ENCODE measurements at regions of chr3 and their contacts with region 1.

Region 1: GRCh38 chr3:131501968-131502367 is 803 bp downstream of the MRPL3 start:
- DNase-seq: no peak
- H3K4me3 ChIP-seq: peak overlapping the region; percentile 67 to 96 (median 91)
- H3K4me3 Mint-ChIP-seq: peak overlapping the region; percentile 96
- H3K27ac ChIP-seq: peak overlapping the region in 1 of 2 donors; percentile 87
- H3K27ac Mint-ChIP-seq: peak overlapping the region; percentile 1 to 93 (median 89)
- H3K4me1 ChIP-seq: peaks cover 32 to 44% of the 10 kb centered on the region in 2 donors
- H3K4me1 Mint-ChIP-seq: peaks cover 45% of the 10 kb centered on the region
- H3K27me3 ChIP-seq: no peaks in the 10 kb centered on the region
- H3K27me3 Mint-ChIP-seq: no peaks in the 10 kb centered on the region
- CTCF ChIP-seq: no peak

Region 2: GRCh38 chr3:131361464-131362421 is 140.2 kb before region 1 on chr3:
- intact Hi-C with region 1: loop called in 1 of 2 experiments (anchors 2 kb)
- DNase-seq: peak; percentile 19 to 97 (median 97)
- H3K4me3 ChIP-seq: peak overlapping the region; percentile 30 to 77 (median 62)
- H3K4me3 Mint-ChIP-seq: peak overlapping the region; percentile 91 to 96
- H3K27ac ChIP-seq: peak overlapping the region in 1 of 2 donors; percentile 95
- H3K27ac Mint-ChIP-seq: peak overlapping the region; percentile 92 to 99 (median 98)
- H3K4me1 ChIP-seq: peaks cover 11 to 43% of the 10 kb centered on the region in 2 donors
- H3K4me1 Mint-ChIP-seq: peaks cover 51% of the 10 kb centered on the region
- H3K27me3 ChIP-seq: peaks cover 0 to 31% of the 10 kb centered on the region in 2 donors
- H3K27me3 Mint-ChIP-seq: peaks cover 0 to 9% (median 4%) of the 10 kb centered on the region in 3 donors
- CTCF ChIP-seq: no peak

Measured in CD14-positive monocyte (primary cell).